ENCODE measurements at regions of chr12 and their contacts with region 1.

Region 1: GRCh38 chr12:14756334-14757143 is 46.7 kb downstream of the WBP11 start:
- DNase-seq: peak in 1 of 2 experiments; percentile 62
- H3K4me3 ChIP-seq: no peak overlapping the region
- H3K27ac ChIP-seq: no peak overlapping the region
- H3K4me1 ChIP-seq: peaks cover 0 to 2% (median 0%) of the 10 kb centered on the region in 4 experiments; a peak in 1 of 7 replicates
- H3K27me3 ChIP-seq: no peaks in the 10 kb centered on the region
- CTCF ChIP-seq: peak; percentile 42 to 71 (median 69)
- EP300 ChIP-seq: no peak
- POLR2A ChIP-seq: no peak
- RAD21 ChIP-seq: peak; percentile 19 to 48; a peak in 3 of 4 replicates

Region 2: DNA sequence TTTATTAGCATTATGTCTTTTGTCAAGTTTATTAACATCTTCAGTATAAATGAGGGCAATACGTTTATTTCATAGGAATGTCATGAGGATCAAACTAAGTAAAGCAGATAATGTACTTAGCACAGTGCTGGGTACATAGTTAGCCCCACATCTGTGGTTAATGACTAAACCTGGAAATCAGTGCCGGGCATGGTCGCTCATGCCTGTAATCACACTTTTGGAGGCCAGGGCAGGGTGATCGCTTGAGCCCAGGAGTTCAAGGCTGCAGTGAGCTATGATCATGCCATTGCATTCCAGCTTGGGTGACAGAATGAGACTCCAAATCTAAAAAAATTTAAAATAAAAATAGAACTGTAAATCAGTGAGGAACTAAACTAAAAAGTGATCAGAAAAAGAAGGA is 15.4 kb before region 1 on chr12:
- CTCF ChIA-PET with region 1: interaction called, 17 read pairs
- POLR2A ChIA-PET with region 1: interaction called, 3 read pairs
- DNase-seq: no peak
- H3K4me3 ChIP-seq: no peak overlapping the region
- H3K27ac ChIP-seq: no peak overlapping the region
- H3K4me1 ChIP-seq: no peaks in the 10 kb centered on the region
- H3K27me3 ChIP-seq: no peaks in the 10 kb centered on the region
- CTCF ChIP-seq: no peak
- EP300 ChIP-seq: no peak
- POLR2A ChIP-seq: no peak
- RAD21 ChIP-seq: no peak

Region 3: GRCh38 chr12:14913381-14913781 is 156.8 kb after region 1 on chr12:
- CTCF ChIA-PET with region 1: no interaction called
- POLR2A ChIA-PET with region 1: no interaction called
- DNase-seq: no peak
- H3K4me3 ChIP-seq: no peak overlapping the region
- H3K27ac ChIP-seq: no peak overlapping the region
- H3K4me1 ChIP-seq: no peaks in the 10 kb centered on the region
- H3K27me3 ChIP-seq: no peaks in the 10 kb centered on the region
- CTCF ChIP-seq: no peak
- EP300 ChIP-seq: no peak
- POLR2A ChIP-seq: no peak
- RAD21 ChIP-seq: no peak

Measured in H1 (cell line).